Vagina (tissue), 2 donors: ENCODE measurements at regions of chr2 and their contacts with region 1.

Region 1: DNA sequence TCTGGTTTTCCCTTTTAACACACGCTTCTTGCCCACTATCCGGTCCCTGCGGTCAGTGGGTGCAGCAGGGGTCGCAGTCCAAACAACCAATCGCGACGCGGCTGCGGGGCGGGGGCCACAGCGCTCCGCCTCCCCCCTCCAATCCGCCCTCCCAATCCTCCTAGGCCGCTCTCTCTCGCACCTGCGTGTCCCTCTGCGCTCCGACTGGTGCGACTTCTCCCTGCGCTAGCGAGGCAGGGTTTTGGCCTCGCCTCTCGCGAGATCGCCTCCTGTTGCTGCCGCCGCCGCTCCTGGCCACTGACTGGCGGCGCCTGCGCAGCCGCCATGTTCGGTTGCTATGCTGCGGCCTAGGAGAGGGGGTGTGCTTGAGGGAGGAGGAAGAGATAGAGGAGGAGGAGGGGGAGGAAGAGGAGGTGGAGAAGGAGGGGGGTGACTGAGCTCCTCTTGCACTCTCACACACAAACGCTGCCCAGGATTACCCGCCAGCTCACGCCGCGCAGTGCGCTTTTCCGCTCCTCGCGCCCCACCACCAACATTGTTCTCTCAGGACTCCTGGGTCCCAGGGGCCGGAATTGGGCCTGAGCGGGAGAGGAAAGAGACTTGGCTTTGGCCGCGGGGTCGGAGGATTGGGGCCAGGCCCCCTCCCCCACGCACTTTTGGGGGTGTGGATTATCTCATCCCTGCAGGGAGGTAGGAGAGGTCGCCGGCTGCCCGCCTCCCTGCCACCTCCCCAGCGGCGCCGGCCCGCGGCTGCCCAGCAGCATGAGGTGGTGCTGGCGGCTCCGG is at the start of gene PTPN4:
- DNase-seq: peak; percentile 97 to 98
- H3K4me3 ChIP-seq: peak within 1 kb of the TSS; percentile 91 to 95
- H3K27ac ChIP-seq: peak within 1 kb of the TSS; percentile 94
- H3K4me1 ChIP-seq: peaks cover 37% of the 10 kb centered on the region
- H3K27me3 ChIP-seq: no peaks in the 10 kb centered on the region
- CTCF ChIP-seq: no peak
- POLR2A ChIP-seq: peak in 1 of 2 donors; percentile 72
- total RNA-seq, gene PTPN4: 31.7 TPM

Region 2: DNA sequence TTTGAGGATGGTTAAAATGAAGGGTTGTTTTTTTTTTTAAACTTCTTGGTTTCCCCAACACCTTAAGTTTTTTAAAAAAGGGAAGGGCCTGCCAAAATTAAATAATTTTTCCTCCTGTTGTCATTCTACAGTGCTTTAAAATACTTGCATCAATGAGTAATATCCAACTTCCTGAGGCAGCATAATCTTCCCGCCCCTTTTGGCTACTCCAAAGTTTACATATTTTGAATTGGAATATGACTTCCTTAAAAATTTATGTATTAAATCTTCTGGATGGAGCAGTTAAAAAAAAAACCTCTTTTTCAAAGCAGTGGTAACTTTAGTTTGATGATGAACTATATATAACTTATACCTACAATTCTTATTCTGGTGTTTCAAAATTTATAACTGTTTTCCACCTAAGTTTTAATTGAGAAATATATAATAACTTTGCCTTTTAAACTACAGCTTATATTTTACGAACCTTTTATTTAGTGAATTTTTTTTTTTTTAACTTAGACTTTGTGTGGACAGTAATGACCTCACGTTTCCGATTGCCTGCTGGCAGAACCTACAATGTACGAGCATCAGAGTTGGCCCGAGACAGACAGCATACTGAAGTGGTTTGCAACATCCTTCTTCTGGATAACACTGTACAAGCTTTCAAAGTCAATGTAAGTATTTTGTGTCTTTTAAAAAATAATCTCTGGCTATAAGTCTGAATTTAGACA is 49.9 kb after region 1 on chr2:
- intact Hi-C with region 1: loop called (anchors 10 kb)
- DNase-seq: no peak
- H3K4me3 ChIP-seq: no peak overlapping the region
- H3K27ac ChIP-seq: no peak overlapping the region
- H3K4me1 ChIP-seq: peaks cover 9% of the 10 kb centered on the region
- H3K27me3 ChIP-seq: no peaks in the 10 kb centered on the region
- CTCF ChIP-seq: no peak
- POLR2A ChIP-seq: no peak

Region 3: DNA sequence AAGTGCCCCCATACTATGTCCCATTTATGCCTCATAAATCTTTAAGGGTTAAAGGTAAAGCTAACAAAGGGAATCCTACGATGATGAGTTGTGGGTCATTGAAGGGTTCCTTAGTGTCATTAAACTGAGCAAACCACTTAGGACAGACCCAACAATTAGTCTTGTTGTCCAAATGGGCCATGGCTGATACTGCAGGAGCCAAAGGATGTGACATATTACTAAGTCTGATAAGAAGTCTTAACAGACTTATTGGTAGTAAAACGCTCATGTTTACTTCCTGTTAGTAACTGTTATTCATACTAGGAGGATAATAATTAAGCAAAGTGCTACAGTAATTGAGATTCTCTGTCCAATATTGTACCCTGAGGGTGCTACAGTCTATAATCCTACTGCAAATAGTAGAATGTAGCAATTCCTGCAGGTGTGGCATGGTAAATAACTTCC is 96.8 kb after region 1 on chr2:
- intact Hi-C with region 1: no loop called
- DNase-seq: no peak
- H3K4me3 ChIP-seq: no peak overlapping the region
- H3K27ac ChIP-seq: no peak overlapping the region
- H3K4me1 ChIP-seq: peaks cover 16% of the 10 kb centered on the region
- H3K27me3 ChIP-seq: no peaks in the 10 kb centered on the region
- CTCF ChIP-seq: no peak
- POLR2A ChIP-seq: no peak